ENCODE measurements at regions of chr4 and their contacts with region 1.

Region 1: DNA sequence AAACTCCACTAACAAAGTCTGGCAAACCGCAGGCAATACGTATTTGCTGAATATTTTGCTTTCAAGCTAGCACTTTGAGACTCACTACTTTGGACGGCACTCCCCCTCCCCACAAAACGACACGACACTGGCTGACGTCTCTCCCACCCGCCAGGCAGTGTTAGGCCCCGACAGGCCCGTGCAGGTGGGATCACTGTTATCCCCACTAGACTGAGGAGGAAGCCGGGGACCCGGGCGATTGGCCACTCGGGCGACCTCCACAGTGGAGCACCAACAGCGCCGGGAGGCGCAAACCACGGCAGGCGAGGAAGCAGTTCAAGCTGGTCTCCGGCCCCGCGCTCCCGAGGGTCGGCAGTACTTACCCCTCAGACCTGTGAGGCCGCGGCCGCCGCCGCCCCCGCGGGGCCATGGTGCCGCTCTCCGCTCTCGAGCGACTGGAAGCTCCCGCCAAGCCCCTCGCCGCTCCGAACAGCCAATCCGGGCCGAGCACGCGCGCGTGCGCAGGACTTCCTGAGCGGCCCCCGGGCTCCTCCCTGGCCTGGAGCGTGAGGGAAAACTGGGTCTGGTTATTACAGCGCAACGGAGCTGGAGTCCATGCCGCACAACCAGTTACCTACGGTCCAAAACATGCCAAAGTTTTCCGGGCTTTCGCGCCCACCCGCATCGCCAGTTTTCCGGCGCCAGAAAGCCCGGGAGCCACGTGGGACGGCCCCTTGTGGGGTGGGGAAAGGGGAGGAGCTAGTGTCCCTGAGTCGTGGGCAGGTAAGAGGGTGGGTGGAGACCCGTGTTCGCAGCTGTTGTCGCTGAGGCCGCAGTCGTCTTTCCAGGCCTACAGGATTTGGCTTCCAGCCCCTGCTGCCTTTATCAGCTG is at the start of gene CENPU:
- DNase-seq: peak; percentile 89 to 98 (median 94)
- ATAC-seq: peak; percentile 98
- H3K4me3 ChIP-seq: peak within 1 kb of the TSS; percentile 82
- H3K4me3 Mint-ChIP-seq: peak within 1 kb of the TSS; percentile 84 to 98 (median 89)
- H3K27ac ChIP-seq: peak within 1 kb of the TSS; percentile 66
- H3K27ac Mint-ChIP-seq: peak within 1 kb of the TSS; percentile 60 to 96 (median 89)
- H3K4me1 ChIP-seq: peaks cover 7 to 11% of the 10 kb centered on the region in 2 donors
- H3K4me1 Mint-ChIP-seq: peaks cover 4 to 50% (median 20%) of the 10 kb centered on the region in 7 donors
- H3K27me3 ChIP-seq: no peaks in the 10 kb centered on the region
- H3K27me3 Mint-ChIP-seq: no peaks in the 10 kb centered on the region
- total RNA-seq, gene CENPU: 1.1 to 43.8 (median 3.1) TPM

Region 2: GRCh38 chr4:183659029-183659871 is 1074.6 kb before region 1 on chr4 and contains the starts of genes RWDD4 and TRAPPC11:
- CTCF ChIA-PET with region 1: no interaction called
- POLR2A ChIA-PET with region 1: no interaction called
- intact Hi-C with region 1: loop called in 1 of 2 experiments (anchors 1 kb)
- DNase-seq: peak; percentile 83 to 97 (median 95)
- ATAC-seq: peak; percentile 99
- H3K4me3 ChIP-seq: peak within 1 kb of the TSS; percentile 87
- H3K4me3 Mint-ChIP-seq: peak within 1 kb of the TSS; percentile 91 to 98 (median 96)
- H3K27ac ChIP-seq: peak within 1 kb of the TSS; percentile 96
- H3K27ac Mint-ChIP-seq: peak within 1 kb of the TSS; percentile 90 to 99 (median 95)
- H3K4me1 ChIP-seq: peaks cover 14 to 19% of the 10 kb centered on the region in 2 donors
- H3K4me1 Mint-ChIP-seq: peaks cover 35 to 48% (median 38%) of the 10 kb centered on the region in 7 donors
- H3K27me3 ChIP-seq: no peaks in the 10 kb centered on the region
- H3K27me3 Mint-ChIP-seq: no peaks in the 10 kb centered on the region
- total RNA-seq, gene RWDD4: 9.3 to 15.8 (median 11.6) TPM
- total RNA-seq, gene TRAPPC11: 26.3 to 48.8 (median 35.6) TPM

Region 3: GRCh38 chr4:184745831-184746795 is 12.2 kb after region 1 on chr4:
- CTCF ChIA-PET with region 1: interaction called, 8 read pairs
- POLR2A ChIA-PET with region 1: interaction called, 7 read pairs
- intact Hi-C with region 1: loop called in 1 of 2 experiments (anchors 1 kb)
- DNase-seq: peak; percentile 37 to 82 (median 76)
- ATAC-seq: peak; percentile 93
- H3K4me3 ChIP-seq: no peak overlapping the region
- H3K4me3 Mint-ChIP-seq: peak overlapping the region; percentile 18 to 73 (median 54)
- H3K27ac ChIP-seq: peak overlapping the region; percentile 30
- H3K27ac Mint-ChIP-seq: peak overlapping the region; percentile 58 to 90 (median 88)
- H3K4me1 ChIP-seq: peaks cover 0 to 14% of the 10 kb centered on the region in 2 donors
- H3K4me1 Mint-ChIP-seq: peaks cover 16 to 20% (median 18%) of the 10 kb centered on the region in 7 donors
- H3K27me3 ChIP-seq: no peaks in the 10 kb centered on the region
- H3K27me3 Mint-ChIP-seq: peaks cover 0 to 3% (median 0%) of the 10 kb centered on the region in 5 donors

Region 4: DNA sequence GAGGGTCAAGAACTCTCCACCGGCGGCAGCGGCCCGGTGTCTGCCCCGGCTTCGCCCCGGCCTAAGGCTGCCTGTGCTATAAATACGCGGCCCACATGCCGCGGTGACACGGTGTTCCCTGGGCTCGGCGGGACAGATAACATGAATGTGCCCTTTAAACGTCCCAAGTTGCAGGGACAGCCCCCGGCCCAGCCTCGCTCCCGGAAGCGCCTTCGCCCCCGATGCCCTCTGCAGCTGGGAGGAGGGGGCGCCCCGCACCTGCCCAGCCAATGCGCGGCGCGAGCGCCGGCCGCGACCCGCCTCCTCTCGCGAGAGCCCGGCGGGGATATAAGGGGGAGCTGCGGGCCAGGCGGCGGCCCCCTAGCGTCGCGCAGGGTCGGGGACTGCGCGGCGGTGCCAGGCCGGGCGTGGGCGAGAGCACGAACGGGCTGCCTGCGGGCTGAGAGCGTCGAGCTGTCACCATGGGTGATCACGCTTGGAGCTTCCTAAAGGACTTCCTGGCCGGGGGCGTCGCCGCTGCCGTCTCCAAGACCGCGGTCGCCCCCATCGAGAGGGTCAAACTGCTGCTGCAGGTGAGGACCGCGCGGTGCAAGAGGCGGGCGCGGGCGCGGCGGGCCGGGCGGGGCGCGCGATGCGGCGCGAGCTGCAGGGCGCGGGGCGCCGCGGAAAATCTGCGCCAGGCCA is 409.2 kb after region 1 on chr4 and contains the start of gene SLC25A4:
- CTCF ChIA-PET with region 1: no interaction called
- POLR2A ChIA-PET with region 1: no interaction called
- intact Hi-C with region 1: loop called in 1 of 2 experiments (anchors 5 kb)
- DNase-seq: peak; percentile 68 to 81 (median 75)
- ATAC-seq: peak; percentile 95
- H3K4me3 ChIP-seq: peak within 1 kb of the TSS; percentile 57
- H3K4me3 Mint-ChIP-seq: peak within 1 kb of the TSS; percentile 84 to 95 (median 90)
- H3K27ac ChIP-seq: peak within 1 kb of the TSS; percentile 52
- H3K27ac Mint-ChIP-seq: peak within 1 kb of the TSS in 7 of 9 donors; percentile 4 to 89 (median 83)
- H3K4me1 ChIP-seq: peaks cover 4 to 13% of the 10 kb centered on the region in 2 donors
- H3K4me1 Mint-ChIP-seq: peaks cover 11 to 15% (median 12%) of the 10 kb centered on the region in 7 donors
- H3K27me3 ChIP-seq: peaks cover 0 to 3% of the 10 kb centered on the region in 2 donors
- H3K27me3 Mint-ChIP-seq: peaks cover 15 to 69% (median 26%) of the 10 kb centered on the region in 5 donors
- total RNA-seq, gene SLC25A4: 0.60 to 7.2 (median 4.9) TPM

Region 5: GRCh38 chr4:185425647-185426352 is 691.9 kb after region 1 on chr4 and contains the start of gene UFSP2:
- CTCF ChIA-PET with region 1: no interaction called
- POLR2A ChIA-PET with region 1: interaction called, 3 read pairs
- intact Hi-C with region 1: loop called in 1 of 2 experiments (anchors 1 kb)
- DNase-seq: peak; percentile 88 to 96 (median 92)
- ATAC-seq: peak; percentile 93
- H3K4me3 ChIP-seq: peak within 1 kb of the TSS; percentile 98
- H3K4me3 Mint-ChIP-seq: peak within 1 kb of the TSS; percentile 78 to 97 (median 90)
- H3K27ac ChIP-seq: peak within 1 kb of the TSS; percentile 95
- H3K27ac Mint-ChIP-seq: peak within 1 kb of the TSS; percentile 89 to 100 (median 99)
- H3K4me1 ChIP-seq: peaks cover 16 to 18% of the 10 kb centered on the region in 2 donors
- H3K4me1 Mint-ChIP-seq: peaks cover 25 to 43% (median 38%) of the 10 kb centered on the region in 7 donors
- H3K27me3 ChIP-seq: no peaks in the 10 kb centered on the region
- H3K27me3 Mint-ChIP-seq: peaks cover 0 to 12% (median 7%) of the 10 kb centered on the region in 5 donors
- total RNA-seq, gene UFSP2: 13.9 to 34.5 (median 21.0) TPM

Measured in naive thymus-derived CD4-positive, alpha-beta T cell (primary cell).